ENCODE measurements at regions of chr10 and their contacts with region 1.

Region 1: DNA sequence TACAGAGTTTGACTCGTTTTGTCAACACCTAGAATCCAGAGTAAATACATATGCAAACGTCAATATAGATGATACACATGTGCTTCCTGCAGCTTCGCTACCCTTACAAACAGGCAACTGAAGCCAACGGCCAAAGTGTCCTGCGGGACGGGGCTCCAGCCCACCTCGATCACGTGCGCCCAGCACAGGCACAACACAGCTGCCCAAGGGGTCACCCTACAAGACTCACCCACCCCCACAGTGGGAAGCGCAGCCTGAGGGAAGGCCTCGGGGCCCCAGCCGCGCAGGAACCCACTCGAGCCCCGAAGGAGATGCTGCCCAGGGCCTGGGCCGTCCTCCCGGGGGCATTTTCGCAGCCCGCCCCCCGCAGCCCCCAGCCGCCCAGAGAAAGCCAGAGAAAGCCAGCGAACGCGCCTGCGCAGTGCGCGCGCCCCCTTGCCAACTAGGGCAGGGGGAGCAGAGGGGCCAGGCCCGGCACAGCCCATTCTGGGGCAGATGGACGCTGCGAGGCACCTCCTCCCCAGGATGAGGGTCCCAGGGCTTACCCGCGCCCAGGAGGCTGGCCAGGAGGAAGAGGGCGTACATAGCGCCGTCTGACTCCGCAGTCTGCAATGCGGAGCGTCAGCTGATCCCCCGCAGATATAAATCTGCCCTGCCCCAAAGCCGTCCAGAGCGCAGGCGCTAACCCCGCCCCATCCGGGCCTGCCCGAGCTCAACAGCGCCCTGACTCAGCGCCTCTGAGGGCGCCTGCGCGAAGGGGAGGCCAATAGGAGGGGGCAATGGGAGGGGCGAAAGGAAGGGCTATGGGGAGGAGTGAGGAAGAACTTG is at the start of gene PSAP:
- DNase-seq: peak; percentile 100
- H3K4me3 ChIP-seq: peak within 1 kb of the TSS; percentile 75
- H3K4me3 Mint-ChIP-seq: peak within 1 kb of the TSS; percentile 92
- H3K27ac Mint-ChIP-seq: peak within 1 kb of the TSS; percentile 90
- H3K4me1 ChIP-seq: peaks cover 20% of the 10 kb centered on the region
- H3K4me1 Mint-ChIP-seq: peaks cover 27% of the 10 kb centered on the region
- H3K27me3 ChIP-seq: no peaks in the 10 kb centered on the region
- H3K27me3 Mint-ChIP-seq: no peaks in the 10 kb centered on the region
- CTCF ChIP-seq: no peak
- total RNA-seq, gene PSAP: 1,227 and 1,316 TPM in 2 replicates

Region 2: DNA sequence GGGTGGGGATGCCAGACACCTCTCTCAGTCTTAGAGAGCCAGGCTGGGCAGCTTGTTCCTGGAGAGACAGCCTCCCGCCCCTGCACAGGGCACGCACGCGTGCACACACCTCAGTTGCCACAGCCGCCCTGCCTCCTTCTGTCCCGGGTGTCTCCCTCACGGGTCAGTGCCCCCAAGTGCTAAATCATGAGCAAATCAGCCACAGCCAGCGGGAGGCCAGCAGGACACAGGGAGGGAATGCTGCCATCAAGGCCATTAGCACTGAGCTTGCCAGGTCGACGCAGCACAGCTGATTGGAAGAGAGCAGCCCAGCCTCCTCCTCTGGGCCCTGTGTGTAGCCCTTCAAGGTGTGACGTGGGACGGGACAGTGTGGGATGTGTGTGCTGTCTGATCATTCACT is 323.7 kb before region 1 on chr10:
- CTCF ChIA-PET with region 1: interaction called, 14 read pairs
- POLR2A ChIA-PET with region 1: no interaction called
- intact Hi-C with region 1: no loop called
- DNase-seq: no peak
- H3K4me3 ChIP-seq: no peak overlapping the region
- H3K4me3 Mint-ChIP-seq: no peak overlapping the region
- H3K27ac Mint-ChIP-seq: no peak overlapping the region
- H3K4me1 ChIP-seq: peaks cover 12% of the 10 kb centered on the region
- H3K4me1 Mint-ChIP-seq: no peaks in the 10 kb centered on the region
- H3K27me3 ChIP-seq: no peaks in the 10 kb centered on the region; the same call in 1 of the 2 replicates
- H3K27me3 Mint-ChIP-seq: no peaks in the 10 kb centered on the region
- CTCF ChIP-seq: no peak

Region 3: GRCh38 chr10:71835671-71836595 is 14.9 kb before region 1 on chr10:
- CTCF ChIA-PET with region 1: interaction called, 8 read pairs
- POLR2A ChIA-PET with region 1: interaction called, 29 read pairs
- intact Hi-C with region 1: loop called (anchors 1 kb)
- DNase-seq: no peak
- H3K4me3 ChIP-seq: no peak overlapping the region
- H3K4me3 Mint-ChIP-seq: no peak overlapping the region
- H3K27ac Mint-ChIP-seq: peak overlapping the region; percentile 46
- H3K4me1 ChIP-seq: peaks cover 56% of the 10 kb centered on the region
- H3K4me1 Mint-ChIP-seq: peaks cover 48% of the 10 kb centered on the region
- H3K27me3 ChIP-seq: no peaks in the 10 kb centered on the region
- H3K27me3 Mint-ChIP-seq: no peaks in the 10 kb centered on the region
- CTCF ChIP-seq: no peak

Region 4: DNA sequence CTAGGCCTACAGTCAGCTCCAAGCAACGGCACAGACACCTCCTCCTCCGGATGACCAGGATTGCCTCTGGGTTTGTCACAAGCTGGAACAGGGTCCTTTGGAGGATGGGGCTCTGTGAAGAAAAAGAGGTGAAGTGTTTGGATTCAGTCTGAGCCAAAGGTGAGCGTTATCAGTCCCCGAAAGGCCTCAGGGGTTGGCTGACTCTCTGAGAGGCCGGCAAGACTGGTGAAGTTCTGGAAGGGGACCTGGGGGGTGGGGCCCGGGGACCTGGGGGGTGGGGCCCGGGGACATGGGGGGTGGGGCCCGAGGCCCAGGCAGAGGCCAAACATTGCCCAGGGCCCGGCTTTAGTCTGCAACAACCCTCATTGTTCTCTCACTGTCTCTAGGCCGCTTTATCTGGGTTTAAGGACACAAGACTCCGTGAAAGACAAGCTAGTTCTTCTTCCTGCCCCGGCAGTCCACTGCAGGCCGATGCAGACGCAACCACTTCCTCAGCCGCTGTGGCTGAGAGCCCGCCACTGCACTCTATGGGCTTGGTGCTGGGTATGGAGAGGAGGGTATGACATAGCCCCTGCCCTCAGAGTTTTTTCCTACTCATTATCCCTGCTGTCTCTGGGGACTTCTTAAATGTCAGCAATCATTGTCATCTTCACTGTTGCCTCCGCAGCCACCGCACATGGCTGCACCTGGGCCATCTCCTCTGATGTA is 27.6 kb after region 1 on chr10:
- CTCF ChIA-PET with region 1: interaction called, 13 read pairs
- POLR2A ChIA-PET with region 1: no interaction called
- intact Hi-C with region 1: no loop called
- DNase-seq: peak in 1 of 2 experiments; percentile 64
- H3K4me3 ChIP-seq: no peak overlapping the region
- H3K4me3 Mint-ChIP-seq: no peak overlapping the region
- H3K27ac Mint-ChIP-seq: no peak overlapping the region
- H3K4me1 ChIP-seq: 0 out of 2 replicates have a peak, but pooled peaks cover 6% of the 10 kb centered on the region
- H3K4me1 Mint-ChIP-seq: no peaks in the 10 kb centered on the region
- H3K27me3 ChIP-seq: no peaks in the 10 kb centered on the region
- H3K27me3 Mint-ChIP-seq: no peaks in the 10 kb centered on the region
- CTCF ChIP-seq: no peak

Measured in Caco-2 (cell line).